ENCODE measurements at regions of chr3 and their contacts with region 1.

Region 1: GRCh38 chr3:108662130-108662738 is 72.7 kb downstream of the DZIP3 start:
- DNase-seq: peak in 4 of 5 donors; percentile 34 to 83 (median 62)
- H3K4me3 ChIP-seq: peak overlapping the region in 1 of 3 donors; percentile 16
- H3K27ac ChIP-seq: no peak overlapping the region
- H3K4me1 ChIP-seq: no peaks in the 10 kb centered on the region
- H3K27me3 ChIP-seq: no peaks in the 10 kb centered on the region
- CTCF ChIP-seq: peak; percentile 61

Region 2: DNA sequence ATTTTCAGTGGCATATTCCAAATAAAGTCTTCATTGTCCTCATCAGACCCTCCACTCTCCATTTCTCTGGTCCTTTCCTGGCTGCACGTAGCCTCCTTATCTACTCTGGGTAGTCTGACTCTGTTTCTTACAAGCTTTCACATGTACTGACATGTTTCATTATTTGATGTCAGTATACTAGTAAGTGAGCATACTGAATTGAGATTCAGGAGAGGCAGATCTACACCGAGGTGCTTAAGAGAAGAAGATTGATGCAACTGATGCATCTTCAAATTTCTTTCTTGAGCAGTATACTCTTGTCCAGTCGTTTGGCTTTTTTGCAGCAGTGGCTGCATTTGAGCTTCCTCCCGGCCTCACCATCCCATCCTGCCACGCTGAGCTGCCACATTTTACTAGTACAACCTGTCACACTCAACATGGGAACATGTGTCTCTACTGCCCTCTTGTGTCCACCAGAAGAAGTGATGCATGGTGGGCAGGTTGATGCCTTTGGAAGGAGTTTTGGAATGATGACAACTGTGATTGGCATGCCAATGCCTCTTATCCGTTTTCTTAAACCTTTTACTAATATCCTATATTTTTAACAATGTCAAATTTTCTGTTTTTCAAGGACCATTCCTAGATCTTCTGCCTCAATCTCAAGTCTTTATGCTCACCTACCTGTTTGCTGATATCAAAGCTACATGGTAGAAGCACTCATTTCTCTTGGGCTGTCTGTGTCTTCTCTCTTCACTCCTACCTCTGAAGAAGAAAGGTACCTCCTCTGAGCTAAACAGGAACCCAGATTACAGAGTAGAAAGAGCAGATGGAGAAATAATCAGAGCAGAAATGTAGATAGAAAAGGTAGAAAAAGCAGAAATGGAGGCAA is 252.8 kb after region 1 on chr3:
- intact Hi-C with region 1: loop called (anchors 10 kb)
- DNase-seq: peak in 4 of 5 donors; percentile 67 to 83 (median 74)
- H3K4me3 ChIP-seq: no peak overlapping the region
- H3K27ac ChIP-seq: no peak overlapping the region
- H3K4me1 ChIP-seq: peaks cover 0 to 4% (median 0%) of the 10 kb centered on the region in 3 donors
- H3K27me3 ChIP-seq: no peaks in the 10 kb centered on the region
- CTCF ChIP-seq: peak; percentile 85

Measured in kidney (tissue), 22 donors.